Activated CD4-positive, alpha-beta T cell treated with anti-CD3 and anti-CD28 coated beads, Interleukin-2, amount 10 ng/mL, durations not matched to agents 24 days and 14 days (primary cell): ENCODE measurements at regions of chr4 and their contacts with region 1.

Region 1: DNA sequence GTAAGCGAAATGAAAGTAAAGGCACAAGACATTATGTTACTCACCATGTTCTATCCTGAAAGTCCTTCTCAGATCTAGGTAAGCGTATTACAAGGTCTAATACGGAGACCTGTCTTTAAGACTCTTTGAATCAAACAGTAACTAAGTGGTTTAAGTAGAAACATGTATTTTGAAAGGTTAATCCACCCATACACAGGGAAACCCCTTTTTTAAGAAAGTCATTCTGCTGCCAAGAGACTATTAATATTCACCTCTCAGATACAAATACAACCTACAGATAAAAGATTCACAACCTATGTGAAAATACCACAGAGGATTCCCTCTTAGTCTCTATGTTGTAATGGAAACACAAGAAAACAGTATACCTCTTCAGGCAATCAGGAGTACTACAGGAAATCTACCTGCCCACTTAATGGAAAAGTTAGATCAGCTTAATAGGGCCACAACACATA is 63.2 kb upstream of the TNIP3 start:
- DNase-seq: no peak
- H3K4me3 Mint-ChIP-seq: peak overlapping the region; percentile 63
- H3K27ac Mint-ChIP-seq: peak overlapping the region; percentile 19
- H3K4me1 Mint-ChIP-seq: peaks cover 18% of the 10 kb centered on the region
- H3K27me3 Mint-ChIP-seq: peaks cover 3% of the 10 kb centered on the region

Region 2: DNA sequence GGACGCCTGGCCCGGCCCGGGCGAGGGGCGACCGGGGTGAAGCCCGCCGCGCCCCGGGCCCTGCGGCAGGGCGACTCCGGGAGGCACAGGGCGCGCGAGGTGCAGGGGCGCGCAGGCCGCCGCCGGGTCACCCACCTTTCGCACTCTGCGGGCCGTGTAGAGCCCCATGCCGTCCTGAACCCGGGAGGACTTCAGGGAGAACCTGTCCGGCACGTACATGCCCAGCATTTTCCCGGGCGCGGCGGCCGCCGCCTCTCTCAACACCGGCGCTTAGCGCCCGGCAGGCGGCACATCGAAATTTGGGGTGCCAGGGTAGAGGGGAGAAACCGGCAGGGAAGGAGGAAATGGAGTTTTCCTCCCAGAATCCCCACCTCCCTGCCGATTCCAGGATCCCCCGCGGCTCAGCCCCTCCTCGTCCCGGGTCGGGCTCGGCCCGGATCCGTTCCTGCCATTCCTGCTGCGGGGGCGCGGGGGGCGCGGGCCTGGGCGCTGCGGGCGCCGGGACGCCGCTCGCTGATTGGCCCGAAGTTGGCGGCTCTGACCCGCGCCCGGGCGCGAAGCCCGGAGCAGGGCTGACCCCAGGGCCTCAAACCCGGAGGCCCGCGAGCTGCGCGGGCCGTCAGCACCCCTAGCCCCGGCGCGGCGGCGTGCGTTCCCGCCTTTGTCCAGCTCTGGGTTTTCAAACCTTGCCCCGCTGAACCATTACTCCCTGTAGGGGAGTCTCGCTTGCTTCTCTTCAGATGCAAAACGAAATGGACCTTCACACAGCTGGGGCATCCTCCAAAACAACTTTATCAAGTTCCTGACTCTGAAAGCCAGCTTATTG is 304.8 kb before region 1 on chr4 and contains the start of gene PRDM5:
- intact Hi-C with region 1: no loop called
- DNase-seq: peak; percentile 67
- H3K4me3 Mint-ChIP-seq: peak within 1 kb of the TSS; percentile 93
- H3K27ac Mint-ChIP-seq: peak within 1 kb of the TSS; percentile 47
- H3K4me1 Mint-ChIP-seq: peaks cover 7% of the 10 kb centered on the region
- H3K27me3 Mint-ChIP-seq: peaks cover 61% of the 10 kb centered on the region
- total RNA-seq, gene PRDM5: not detected in 2 replicates

Region 3: GRCh38 chr4:121243485-121243884 is 16.1 kb after region 1 on chr4:
- intact Hi-C with region 1: loop called (anchors 2 kb)
- DNase-seq: no peak
- H3K4me3 Mint-ChIP-seq: peak overlapping the region; percentile 45
- H3K27ac Mint-ChIP-seq: peak overlapping the region; percentile 74
- H3K4me1 Mint-ChIP-seq: peaks cover 35% of the 10 kb centered on the region
- H3K27me3 Mint-ChIP-seq: peaks cover 4% of the 10 kb centered on the region

Region 4: DNA sequence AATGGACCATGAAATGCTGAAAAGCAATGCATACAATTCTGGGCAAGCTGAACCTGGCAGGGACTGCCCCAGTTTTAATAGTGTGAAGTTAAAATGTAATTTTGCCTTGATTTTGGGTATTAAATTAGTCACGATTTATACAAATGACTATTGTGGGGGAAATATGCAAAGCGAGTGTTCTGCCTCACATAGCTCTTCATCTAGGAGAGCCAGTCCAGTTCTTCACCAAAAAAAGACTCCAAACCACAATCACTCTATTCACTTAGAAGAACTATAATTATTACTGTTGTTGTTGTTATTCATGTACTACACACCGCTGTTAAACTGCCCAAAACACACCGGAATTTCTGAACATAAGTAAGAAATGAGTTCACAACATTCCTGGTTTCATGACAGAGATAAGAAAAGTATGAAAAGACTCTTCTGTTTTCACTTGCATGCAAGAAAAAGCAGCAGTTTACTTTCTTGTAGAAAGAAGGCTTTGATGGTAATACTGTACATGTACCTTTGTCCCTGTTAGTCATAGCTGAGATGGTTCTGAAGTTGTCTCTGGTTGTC is 51.5 kb after region 1 on chr4:
- intact Hi-C with region 1: loop called (anchors 1 kb)
- DNase-seq: no peak
- H3K4me3 Mint-ChIP-seq: no peak overlapping the region
- H3K27ac Mint-ChIP-seq: peak overlapping the region; percentile 35
- H3K4me1 Mint-ChIP-seq: peaks cover 2% of the 10 kb centered on the region
- H3K27me3 Mint-ChIP-seq: peaks cover 28% of the 10 kb centered on the region